ENCODE measurements at regions of chr10 and their contacts with region 1.

Region 1: DNA sequence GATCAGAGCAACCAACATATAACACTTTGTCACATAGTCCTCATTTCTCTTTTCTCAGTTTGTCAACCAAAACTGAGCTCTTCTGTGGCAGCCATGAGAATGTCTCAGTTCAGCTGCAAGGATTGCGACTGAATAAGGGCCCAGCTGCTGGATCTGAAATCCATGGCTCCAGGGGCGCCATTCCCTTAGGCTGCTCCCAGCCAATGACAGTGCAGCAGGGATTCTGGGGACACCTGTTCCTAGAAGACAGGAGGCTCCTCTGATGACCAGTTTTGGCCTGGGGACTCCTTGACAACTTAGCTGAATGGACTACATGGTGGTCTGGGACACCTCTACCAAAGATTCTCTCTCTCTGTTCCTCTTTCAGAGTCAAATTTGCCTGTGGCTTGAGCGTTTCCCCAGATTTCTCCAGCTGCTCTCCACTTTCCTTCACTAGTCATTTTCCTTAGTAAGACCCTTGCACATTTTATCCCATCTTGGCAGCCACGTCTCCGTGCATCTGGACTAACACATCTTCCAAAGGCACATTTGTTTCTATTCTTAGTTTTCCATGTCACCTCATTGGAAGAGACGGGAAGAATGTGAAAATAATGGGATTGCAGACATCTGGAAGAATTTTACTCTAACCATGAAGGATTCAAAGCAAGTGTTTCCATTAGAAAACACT is 28.1 kb upstream of the KIF5B start:
- DNase-seq: no peak
- H3K4me3 ChIP-seq: no peak overlapping the region
- H3K27ac ChIP-seq: no peak overlapping the region
- H3K4me1 ChIP-seq: no peaks in the 10 kb centered on the region
- H3K27me3 ChIP-seq: no peaks in the 10 kb centered on the region
- CTCF ChIP-seq: no peak
- POLR2A ChIP-seq: no peak

Region 2: GRCh38 chr10:31994926-31995325 is 89.4 kb before region 1 on chr10:
- intact Hi-C with region 1: no loop called
- DNase-seq: no peak
- H3K4me3 ChIP-seq: no peak overlapping the region
- H3K27ac ChIP-seq: no peak overlapping the region
- H3K4me1 ChIP-seq: no peaks in the 10 kb centered on the region
- H3K27me3 ChIP-seq: no peaks in the 10 kb centered on the region
- CTCF ChIP-seq: no peak
- POLR2A ChIP-seq: no peak

Region 3: DNA sequence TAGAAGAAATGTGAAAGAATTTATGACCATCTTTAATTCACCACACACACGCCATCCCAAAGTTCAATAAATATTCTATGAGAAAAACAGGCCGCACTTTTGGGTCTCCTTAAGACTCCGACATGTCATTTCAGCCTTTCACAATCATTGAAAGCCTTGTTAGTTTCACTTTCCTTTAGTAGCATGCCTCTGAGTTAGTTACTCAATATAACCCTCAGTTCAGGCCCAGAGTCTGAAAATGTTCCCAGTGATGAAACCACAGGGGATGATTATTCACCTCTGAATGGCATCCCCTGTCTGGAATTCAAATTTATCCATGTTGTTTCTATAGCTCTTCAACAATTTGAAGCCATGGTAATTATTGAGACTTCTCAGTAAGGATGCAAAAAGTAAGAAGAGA is 1528.2 kb after region 1 on chr10:
- intact Hi-C with region 1: loop called (anchors 5 kb)
- DNase-seq: no peak
- H3K4me3 ChIP-seq: no peak overlapping the region
- H3K27ac ChIP-seq: peak overlapping the region; percentile 21
- H3K4me1 ChIP-seq: no peaks in the 10 kb centered on the region
- H3K27me3 ChIP-seq: no peaks in the 10 kb centered on the region
- CTCF ChIP-seq: no peak
- POLR2A ChIP-seq: no peak